AG04449 (cell line): ENCODE measurements at regions of chr1 and their contacts with region 1.

Region 1: GRCh38 chr1:3453203-3453761 is 1.2 kb upstream of the ARHGEF16 start:
- DNase-seq: no peak
- H3K4me3 ChIP-seq: no peak overlapping the region
- CTCF ChIP-seq: peak; percentile 98

Region 2: DNA sequence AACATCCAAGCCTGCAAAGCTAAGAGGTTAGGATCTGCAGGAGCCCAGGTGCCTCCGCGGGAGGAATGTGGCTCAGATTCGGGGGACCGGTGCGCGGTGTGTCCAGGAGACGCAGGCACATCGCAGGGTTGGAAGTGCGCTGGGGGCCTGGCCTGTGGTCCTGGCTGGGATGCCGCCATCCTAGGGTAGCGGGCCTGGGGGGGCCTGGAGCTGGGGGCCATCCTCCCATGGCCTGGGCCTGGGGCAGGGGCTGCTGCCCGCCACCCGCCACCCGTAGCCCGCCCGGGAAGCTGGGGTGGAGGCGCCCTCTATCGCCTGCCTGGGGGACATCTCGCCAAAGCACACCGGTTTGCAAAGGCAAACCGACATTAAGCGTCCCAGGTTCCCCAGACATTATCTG is 169.4 kb before region 1 on chr1:
- CTCF ChIA-PET with region 1: no interaction called
- POLR2A ChIA-PET with region 1: no interaction called
- DNase-seq: no peak
- H3K4me3 ChIP-seq: no peak overlapping the region
- CTCF ChIP-seq: peak; percentile 70

Region 3: GRCh38 chr1:3441410-3441847 is 11.9 kb before region 1 on chr1:
- CTCF ChIA-PET with region 1: interaction called, 36 read pairs
- POLR2A ChIA-PET with region 1: no interaction called
- DNase-seq: no peak
- H3K4me3 ChIP-seq: no peak overlapping the region
- CTCF ChIP-seq: no peak

Region 4: DNA sequence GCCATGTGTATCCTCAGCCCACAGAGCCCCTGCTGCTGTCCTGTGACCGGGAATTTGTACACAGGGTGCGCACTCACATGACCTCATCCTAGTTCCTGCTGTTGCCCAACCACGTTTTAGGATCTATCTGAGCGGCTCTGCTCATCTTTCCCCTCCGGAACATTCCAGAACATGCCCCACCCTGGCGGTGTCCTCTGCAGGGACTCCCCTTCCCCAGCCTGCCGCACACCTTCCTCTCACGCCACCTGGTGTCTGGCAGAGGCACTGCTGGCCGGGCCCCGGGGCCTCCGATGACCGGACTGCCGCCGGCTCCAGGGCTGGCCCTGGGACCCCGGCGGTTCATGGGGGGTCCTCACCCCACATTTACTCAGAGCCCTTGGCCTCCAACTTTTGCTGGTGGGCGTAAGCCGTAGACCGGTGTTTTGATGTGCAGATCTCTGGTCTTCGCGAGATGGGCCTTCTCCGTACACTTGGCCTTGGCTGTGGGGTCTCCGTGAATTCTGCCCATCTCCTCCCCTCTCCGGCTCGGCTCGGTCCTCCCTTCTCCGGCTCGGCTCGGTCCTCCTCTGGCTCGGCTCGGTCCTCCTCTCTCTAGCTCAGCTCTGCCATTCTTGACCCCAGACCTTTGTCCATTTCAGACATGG is 30.6 kb after region 1 on chr1:
- CTCF ChIA-PET with region 1: interaction called, 115 read pairs
- POLR2A ChIA-PET with region 1: no interaction called
- DNase-seq: no peak
- H3K4me3 ChIP-seq: no peak overlapping the region
- CTCF ChIP-seq: peak; percentile 89

Region 5: DNA sequence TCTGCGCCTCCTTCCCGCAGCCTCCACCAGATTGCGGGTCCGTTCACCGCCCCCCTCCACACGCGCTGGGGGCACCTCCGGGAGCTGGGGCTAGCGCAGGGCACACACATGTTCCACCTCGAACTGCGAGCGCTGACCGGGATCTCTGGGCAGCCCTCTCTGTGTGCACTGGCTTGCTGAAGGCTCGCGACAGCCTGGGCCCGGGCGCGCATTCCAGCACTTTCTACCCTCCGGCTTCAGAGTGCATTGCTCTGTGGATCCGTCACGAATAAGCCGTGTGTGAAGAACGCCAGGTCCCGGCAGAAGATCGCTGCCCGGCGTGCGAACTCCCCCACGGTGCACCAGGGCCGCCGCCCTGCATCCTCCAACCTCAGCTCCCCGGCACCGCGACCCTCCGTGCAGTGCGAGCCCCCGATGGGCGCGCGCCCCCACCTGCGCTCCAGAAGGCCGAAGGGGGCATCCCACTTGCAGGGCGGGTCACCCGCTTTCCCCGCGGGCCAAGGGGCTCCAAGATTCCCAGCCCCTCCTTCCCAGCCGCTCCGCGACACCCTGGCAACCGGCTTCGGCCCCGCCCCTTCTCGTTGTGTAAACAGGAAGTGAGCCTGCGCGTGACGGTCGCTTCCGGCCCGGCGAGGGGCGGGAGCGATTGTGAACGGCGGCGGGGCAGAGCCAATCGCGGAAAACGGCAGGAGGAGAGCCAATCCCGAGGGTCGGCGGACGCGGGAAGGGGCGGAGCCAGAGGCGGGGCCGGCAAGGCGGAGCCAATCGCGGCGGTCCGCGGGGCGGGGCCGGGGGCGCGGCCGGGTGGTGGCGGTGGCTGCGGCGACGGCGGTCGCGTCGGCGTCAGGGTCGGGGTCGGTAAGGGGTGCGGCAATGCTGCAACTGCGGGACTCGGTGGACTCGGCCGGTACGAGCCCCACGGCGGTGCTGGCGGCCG is 171.2 kb after region 1 on chr1 and contains the start of gene TPRG1L:
- CTCF ChIA-PET with region 1: interaction called, 166 read pairs
- POLR2A ChIA-PET with region 1: no interaction called
- DNase-seq: peak; percentile 34
- H3K4me3 ChIP-seq: peak within 1 kb of the TSS; percentile 94
- CTCF ChIP-seq: no peak

Region 6: DNA sequence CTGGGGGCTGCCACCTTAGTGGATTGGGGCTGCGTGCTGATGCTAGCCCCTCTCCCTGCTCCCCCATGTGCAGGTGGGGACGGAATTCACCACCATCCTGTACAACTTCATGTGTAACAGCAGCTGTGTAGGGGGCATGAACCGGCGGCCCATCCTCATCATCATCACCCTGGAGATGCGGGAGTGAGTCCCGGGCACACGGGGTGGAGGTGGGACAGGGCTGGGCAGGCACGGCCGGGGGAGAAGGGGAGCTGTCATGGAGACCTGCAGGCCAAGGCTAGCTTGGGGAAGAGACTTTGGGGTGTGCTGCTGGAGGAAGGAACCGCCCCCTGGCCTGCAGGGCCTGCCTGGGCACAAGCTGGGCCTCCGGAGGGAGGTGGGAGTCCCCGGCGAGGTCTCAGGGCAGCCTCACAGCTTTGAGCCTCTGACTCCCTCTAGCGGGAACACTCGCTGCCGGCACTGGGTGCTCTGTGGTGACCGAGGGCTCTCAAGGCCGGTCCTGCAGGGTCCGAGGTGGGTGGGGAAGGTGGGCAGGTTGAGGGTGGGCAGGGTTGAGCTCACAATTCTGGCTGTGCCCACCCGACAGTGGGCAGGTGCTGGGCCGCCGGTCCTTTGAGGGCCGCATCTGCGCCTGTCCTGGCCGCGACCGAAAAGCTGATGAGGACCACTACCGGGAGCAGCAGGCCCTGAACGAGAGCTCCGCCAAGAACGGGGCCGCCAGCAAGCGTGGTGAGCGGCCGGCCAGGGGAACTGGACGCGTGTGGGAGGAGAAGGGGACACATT is 274.0 kb after region 1 on chr1:
- CTCF ChIA-PET with region 1: interaction called, 14 read pairs
- POLR2A ChIA-PET with region 1: no interaction called
- DNase-seq: no peak
- H3K4me3 ChIP-seq: no peak overlapping the region
- CTCF ChIP-seq: peak; percentile 56